ENCODE measurements at regions of chr4 and their contacts with region 1.

Region 1: GRCh38 chr4:78775303-78776030 is 683 bp upstream of the BMP2K start:
- DNase-seq: peak; percentile 90 to 95 (median 95)
- ATAC-seq: peak; percentile 92 to 93
- H3K4me3 ChIP-seq: peak overlapping the region; percentile 100
- H3K27ac ChIP-seq: peak overlapping the region; percentile 100
- H3K4me1 ChIP-seq: no peaks in the 10 kb centered on the region
- H3K27me3 ChIP-seq: no peaks in the 10 kb centered on the region

Region 2: DNA sequence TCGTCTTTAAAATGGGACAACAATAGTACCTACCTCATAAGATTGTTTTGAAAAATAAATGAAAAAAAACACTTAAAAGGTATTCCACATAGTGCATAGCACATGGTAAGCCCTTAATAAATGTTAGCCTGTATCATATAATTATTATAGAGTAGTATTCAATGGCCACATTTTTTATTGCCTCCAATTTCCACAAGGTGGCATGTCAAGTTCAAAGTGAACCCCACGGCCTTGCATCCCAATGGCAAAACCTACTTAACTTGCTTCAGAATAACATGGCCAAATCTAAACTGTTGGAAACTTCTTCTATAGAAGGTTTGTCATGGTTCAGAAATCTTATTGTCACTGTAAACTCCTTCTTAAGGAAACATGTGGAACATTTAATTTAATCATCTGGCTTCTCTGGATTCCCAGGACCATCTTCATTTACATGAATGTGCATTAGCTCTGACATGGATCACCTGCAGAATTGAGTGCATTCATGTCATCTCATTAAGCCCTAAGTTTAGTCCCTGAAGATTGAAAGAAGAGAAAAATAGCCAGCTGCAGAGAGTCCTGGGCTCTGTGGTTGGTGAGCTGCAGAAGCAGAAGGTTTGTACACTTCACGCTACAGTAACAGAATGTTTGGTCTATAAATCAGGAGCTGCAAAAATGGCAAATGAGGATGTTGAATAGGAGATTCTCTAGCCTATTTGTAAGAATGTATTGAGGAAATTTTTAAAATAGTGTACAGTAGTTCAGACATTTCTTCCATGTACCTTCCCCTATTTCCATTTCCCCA is 162.9 kb before region 1 on chr4:
- intact Hi-C with region 1: loop called in 2 of 4 experiments (anchors 10 kb)
- DNase-seq: peak in 1 of 3 donors; percentile 46
- ATAC-seq: peak; percentile 66 to 72
- H3K4me3 ChIP-seq: no peak overlapping the region
- H3K27ac ChIP-seq: no peak overlapping the region
- H3K4me1 ChIP-seq: peaks cover 2% of the 10 kb centered on the region
- H3K27me3 ChIP-seq: no peaks in the 10 kb centered on the region

Region 3: DNA sequence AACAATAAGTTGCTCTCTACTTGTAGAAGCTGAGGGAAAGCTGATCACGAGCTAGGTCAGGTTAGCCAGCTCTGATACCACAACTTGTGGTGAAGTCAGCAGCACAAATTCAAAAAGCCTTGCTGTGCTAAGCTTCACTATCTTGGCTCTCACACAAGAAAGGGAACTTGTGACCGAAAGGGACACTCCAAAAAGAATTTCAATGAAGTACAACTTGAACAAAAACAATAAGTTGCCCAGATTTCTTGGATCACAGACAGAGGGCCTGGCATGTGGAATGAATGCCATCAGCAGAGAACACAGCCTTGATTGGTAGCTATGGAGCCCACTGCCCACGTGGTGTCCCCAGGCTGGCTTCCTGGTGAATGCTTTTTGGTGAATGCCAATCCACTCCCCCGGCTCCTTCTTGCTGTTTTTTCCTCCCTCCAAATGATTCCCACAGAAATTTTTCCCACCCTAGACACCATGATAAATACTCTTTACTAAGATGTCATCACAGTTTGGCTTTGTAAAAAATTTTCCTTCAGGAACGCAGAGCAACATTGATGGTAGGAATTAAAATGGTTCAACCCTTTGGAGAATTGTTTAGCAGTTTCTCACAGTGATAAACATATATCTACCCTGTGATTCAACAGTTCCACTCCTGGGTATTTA is 141.3 kb before region 1 on chr4:
- intact Hi-C with region 1: loop called in 1 of 4 experiments (anchors 5 kb)
- DNase-seq: peak; percentile 46 to 81 (median 78)
- ATAC-seq: peak; percentile 74 to 84
- H3K4me3 ChIP-seq: no peak overlapping the region
- H3K27ac ChIP-seq: no peak overlapping the region
- H3K4me1 ChIP-seq: peaks cover 2% of the 10 kb centered on the region
- H3K27me3 ChIP-seq: no peaks in the 10 kb centered on the region

Region 4: DNA sequence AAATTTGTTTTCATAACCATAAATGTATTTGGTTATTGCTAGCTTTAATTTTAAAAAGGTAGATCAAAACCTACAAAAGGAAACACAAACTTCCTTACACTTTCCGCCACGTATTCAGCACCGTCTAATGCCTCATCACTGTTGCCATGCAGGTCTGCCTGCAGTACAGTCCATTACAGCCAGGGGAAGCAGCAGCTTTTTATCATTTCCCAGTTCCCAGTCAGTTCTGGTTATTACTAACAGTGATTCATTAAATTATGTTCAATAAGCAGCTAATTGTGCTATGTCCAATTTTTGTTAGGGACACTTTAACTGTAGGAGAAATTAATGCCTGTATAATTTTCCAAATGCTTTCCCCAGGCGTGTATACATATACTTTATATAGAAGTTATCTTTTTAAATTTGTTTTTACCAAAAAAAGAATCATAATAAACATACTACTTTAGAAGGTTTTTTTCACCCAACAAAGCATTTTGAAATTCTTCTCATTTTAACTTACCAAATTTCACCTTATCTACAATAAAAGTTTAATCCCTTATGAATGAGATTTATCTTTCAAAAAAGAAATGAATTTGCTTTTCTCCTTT is 130.6 kb before region 1 on chr4:
- intact Hi-C with region 1: loop called in 2 of 4 experiments (anchors 5 to 10 kb)
- DNase-seq: peak; percentile 53 to 82 (median 72)
- ATAC-seq: peak; percentile 91
- H3K4me3 ChIP-seq: no peak overlapping the region
- H3K27ac ChIP-seq: no peak overlapping the region
- H3K4me1 ChIP-seq: peaks cover 4% of the 10 kb centered on the region
- H3K27me3 ChIP-seq: no peaks in the 10 kb centered on the region

Region 5: GRCh38 chr4:78704981-78705683 is 70.3 kb before region 1 on chr4:
- intact Hi-C with region 1: loop called in 1 of 4 experiments (anchors 10 kb)
- DNase-seq: no peak
- ATAC-seq: peak; percentile 65 to 77
- H3K4me3 ChIP-seq: no peak overlapping the region
- H3K27ac ChIP-seq: no peak overlapping the region
- H3K4me1 ChIP-seq: peaks cover 3% of the 10 kb centered on the region
- H3K27me3 ChIP-seq: no peaks in the 10 kb centered on the region

Region 6: DNA sequence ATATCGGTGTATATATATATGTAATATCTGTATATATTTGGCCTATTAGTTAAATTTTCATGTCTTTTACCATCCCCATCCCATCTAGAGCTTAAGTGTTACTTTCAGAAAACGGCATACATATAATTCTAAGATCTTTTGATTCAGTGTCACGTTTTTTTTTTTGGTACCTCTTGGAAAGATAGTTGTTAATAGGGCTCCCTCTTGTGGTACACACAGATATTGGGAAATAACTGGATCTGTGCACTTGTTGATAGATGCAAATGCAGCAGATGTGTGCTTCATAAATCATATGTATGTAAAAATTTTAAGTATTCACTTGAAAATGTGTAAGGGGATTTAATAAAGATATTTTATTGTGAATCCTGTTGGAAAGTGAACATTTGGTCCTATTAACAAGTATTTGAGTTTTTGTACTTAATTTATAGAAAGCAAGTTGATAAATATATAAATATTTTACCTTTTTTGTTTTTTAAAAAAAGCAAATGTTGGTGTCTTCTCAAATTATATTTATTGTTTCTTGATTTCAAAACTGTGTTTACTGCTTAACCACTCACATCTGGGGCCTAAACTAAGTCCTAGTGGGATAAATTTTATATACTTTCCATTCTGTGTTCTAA is 89.0 kb after region 1 on chr4:
- intact Hi-C with region 1: loop called in 2 of 4 experiments (anchors 10 kb)
- DNase-seq: no peak
- ATAC-seq: peak; percentile 59 to 61
- H3K4me3 ChIP-seq: no peak overlapping the region
- H3K27ac ChIP-seq: no peak overlapping the region
- H3K4me1 ChIP-seq: no peaks in the 10 kb centered on the region
- H3K27me3 ChIP-seq: no peaks in the 10 kb centered on the region